Psoas muscle (tissue), 8 donors: ENCODE measurements at regions of chr12 and their contacts with region 1.

Region 1: GRCh38 chr12:15001733-15002382 is 29.0 kb downstream of the PDE6H start:
- DNase-seq: peak; percentile 30 to 72
- ATAC-seq: peak; percentile 76 to 93 (median 82)
- H3K4me3 ChIP-seq: peak overlapping the region; percentile 41
- H3K27ac ChIP-seq: peak overlapping the region; percentile 34
- H3K4me1 ChIP-seq: peaks cover 21% of the 10 kb centered on the region
- H3K27me3 ChIP-seq: no peaks in the 10 kb centered on the region
- CTCF ChIP-seq: no peak

Region 2: DNA sequence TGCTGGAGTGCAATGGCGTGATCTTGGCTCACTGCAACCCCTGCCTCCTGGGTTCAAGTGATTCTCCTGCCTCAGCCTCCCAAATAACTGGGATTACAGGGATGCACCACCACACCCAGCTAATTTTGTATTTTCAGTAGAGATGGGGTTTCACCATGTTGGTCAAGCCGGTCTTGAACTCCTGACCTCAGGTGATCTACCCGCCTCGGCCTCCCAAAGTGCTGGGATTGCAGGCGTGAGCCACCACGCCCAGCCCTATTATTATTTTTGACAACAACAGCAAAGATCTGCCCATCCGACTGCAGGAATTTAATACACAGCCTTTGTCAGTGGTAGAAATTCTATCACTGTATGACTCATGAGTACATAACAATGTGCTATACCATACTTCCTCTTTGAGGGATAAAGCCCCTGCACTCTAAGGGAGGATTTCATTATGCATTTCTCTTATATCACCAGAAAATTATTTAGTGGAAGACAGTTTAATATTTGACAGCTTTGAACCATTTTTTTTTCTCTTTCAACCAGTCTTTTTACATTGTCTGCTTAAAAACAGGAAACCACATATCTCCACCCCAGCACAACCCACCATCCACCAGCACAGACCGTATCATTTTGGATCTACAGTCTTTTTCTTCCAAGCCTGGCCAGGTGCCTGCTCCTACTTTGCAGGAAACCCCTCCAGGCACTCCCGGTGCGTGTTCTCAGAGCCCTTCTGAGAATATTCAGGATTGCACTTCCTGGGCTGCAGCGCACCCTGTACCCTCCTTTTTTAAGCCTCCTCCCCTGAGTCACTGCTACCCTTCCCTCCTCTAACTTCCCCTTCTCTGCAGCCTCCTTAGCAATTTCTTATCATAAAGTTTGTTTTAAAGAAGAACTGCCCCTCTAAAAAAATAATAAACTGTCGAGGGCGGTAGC is 41.1 kb before region 1 on chr12:
- intact Hi-C with region 1: no loop called
- DNase-seq: peak in 1 of 2 donors; percentile 54
- ATAC-seq: peak in 3 of 4 donors; percentile 37 to 66 (median 58)
- H3K4me3 ChIP-seq: peak overlapping the region; percentile 63
- H3K27ac ChIP-seq: peak overlapping the region; percentile 61
- H3K4me1 ChIP-seq: no peaks in the 10 kb centered on the region
- H3K27me3 ChIP-seq: no peaks in the 10 kb centered on the region
- CTCF ChIP-seq: no peak

Region 3: GRCh38 chr12:14989790-14990189 is 12.1 kb before region 1 on chr12:
- intact Hi-C with region 1: loop called in 1 of 2 experiments (anchors 1 kb)
- DNase-seq: no peak
- ATAC-seq: no peak
- H3K4me3 ChIP-seq: no peak overlapping the region
- H3K27ac ChIP-seq: no peak overlapping the region
- H3K4me1 ChIP-seq: no peaks in the 10 kb centered on the region
- H3K27me3 ChIP-seq: no peaks in the 10 kb centered on the region
- CTCF ChIP-seq: no peak

Region 4: GRCh38 chr12:16086462-16086861 is 1084.6 kb after region 1 on chr12:
- intact Hi-C with region 1: no loop called
- DNase-seq: no peak
- ATAC-seq: no peak
- H3K4me3 ChIP-seq: no peak overlapping the region
- H3K27ac ChIP-seq: no peak overlapping the region
- H3K4me1 ChIP-seq: no peaks in the 10 kb centered on the region
- H3K27me3 ChIP-seq: no peaks in the 10 kb centered on the region
- CTCF ChIP-seq: no peak